K562 (cell line): ENCODE measurements at regions of chr14 and their contacts with region 1.

Region 1: GRCh38 chr14:50396631-50397390 is at the start of gene CDKL1:
- DNase-seq: peak; percentile 59 to 76 (median 74)
- ATAC-seq: peak; percentile 88
- H3K4me3 ChIP-seq: peak within 1 kb of the TSS; percentile 60
- H3K27ac ChIP-seq: peak within 1 kb of the TSS; percentile 74
- H3K4me1 ChIP-seq: peaks cover 5 to 15% of the 10 kb centered on the region in 2 experiments; a peak in 4 of 5 replicates
- H3K27me3 ChIP-seq: no peaks in the 10 kb centered on the region
- CTCF ChIP-seq: no peak
- EP300 ChIP-seq: no peak
- POLR2A ChIP-seq: peak; percentile 7; the same call in 1 of the 2 replicates
- RAD21 ChIP-seq: no peak
- polyA plus RNA-seq, gene CDKL1: 2.3 to 4.8 TPM

Region 2: GRCh38 chr14:50342221-50343078 is 54.4 kb before region 1 on chr14:
- CTCF ChIA-PET with region 1: no interaction called
- POLR2A ChIA-PET with region 1: no interaction called
- in situ Hi-C with region 1: no loop called
- intact Hi-C with region 1: loop called (anchors 2 kb)
- DNase-seq: peak; percentile 43 to 90 (median 70)
- ATAC-seq: peak; percentile 97
- H3K4me3 ChIP-seq: no peak overlapping the region
- H3K27ac ChIP-seq: peak overlapping the region; percentile 45; the same call in 1 of the 3 replicates
- H3K4me1 ChIP-seq: peaks cover 0 to 22% of the 10 kb centered on the region in 2 experiments; a peak in 3 of 5 replicates
- H3K27me3 ChIP-seq: no peaks in the 10 kb centered on the region
- CTCF ChIP-seq: peak; percentile 72 to 84 (median 74)
- EP300 ChIP-seq: peak; percentile 73; the same call in 1 of the 2 replicates
- POLR2A ChIP-seq: no peak
- RAD21 ChIP-seq: peak; percentile 90